Motor neuron (in vitro differentiated cells): ENCODE measurements at regions of chr3 and their contacts with region 1.

Region 1: GRCh38 chr3:43531835-43532234 is 90.0 kb downstream of the ANO10 start:
- ATAC-seq: peak in 4 of 8 experiments; percentile 30 to 88 (median 59)
- H3K4me3 ChIP-seq: no peak overlapping the region
- H3K27ac ChIP-seq: no peak overlapping the region
- H3K4me1 ChIP-seq: peaks cover 0 to 7% of the 10 kb centered on the region in 2 donors

Region 2: GRCh38 chr3:44208086-44208485 is 676.3 kb after region 1 on chr3:
- in situ Hi-C with region 1: loop called in 1 of 9 experiments (anchors 25 kb)
- ATAC-seq: peak in 3 of 8 experiments; percentile 40 to 91 (median 89)
- H3K4me3 ChIP-seq: no peak overlapping the region
- H3K27ac ChIP-seq: no peak overlapping the region
- H3K4me1 ChIP-seq: no peaks in the 10 kb centered on the region